Mammary epithelial cell (primary cell): ENCODE measurements at regions of chr7 and their contacts with region 1.

Region 1: DNA sequence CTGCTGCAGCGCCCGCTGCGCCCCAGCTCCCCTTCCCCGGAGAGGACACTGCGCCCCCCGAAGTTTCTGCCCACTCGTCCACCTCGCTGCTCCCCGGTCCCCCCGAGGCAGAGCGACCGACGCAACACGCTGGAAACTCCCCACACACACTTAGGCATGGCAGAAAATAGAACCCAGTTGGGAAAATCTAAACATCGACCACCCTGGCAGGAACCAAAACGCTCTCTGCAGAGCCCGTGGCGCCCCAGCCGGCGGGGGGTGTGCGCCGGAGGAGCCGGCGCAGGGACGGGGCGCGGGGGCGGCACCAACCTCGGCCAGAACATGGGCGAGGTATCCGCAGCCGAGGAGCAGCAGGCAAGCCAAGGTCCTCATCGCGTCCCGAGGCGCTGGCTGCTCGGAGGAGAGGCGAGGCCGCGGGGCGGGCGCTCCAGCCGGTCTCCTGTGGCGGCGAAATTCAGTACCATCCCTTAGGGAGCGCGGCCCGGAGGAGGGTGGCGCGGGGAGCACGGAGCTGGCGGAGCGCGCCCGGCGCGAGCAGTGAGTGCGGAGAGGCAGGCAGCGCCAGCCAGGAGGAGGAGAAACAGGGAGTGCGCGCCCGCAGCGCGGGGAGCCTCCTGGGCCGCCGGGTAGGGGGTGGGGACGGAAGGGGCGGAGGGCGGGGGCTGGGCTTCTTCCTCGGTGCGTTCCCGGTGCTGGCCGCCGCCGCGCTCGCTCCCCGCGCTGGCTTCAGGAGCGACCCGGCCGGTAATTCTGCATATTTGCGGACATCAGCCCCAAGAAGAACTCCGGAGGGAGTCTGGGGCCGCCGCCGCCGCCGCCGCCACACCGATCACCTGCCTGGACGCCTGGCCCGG is 789 bp downstream of the PDGFA start:
- DNase-seq: peak; percentile 82
- H3K4me3 ChIP-seq: peak overlapping the region; percentile 66 to 92 (median 88)
- H3K27ac ChIP-seq: peak overlapping the region; percentile 46
- H3K4me1 ChIP-seq: peaks cover 50% of the 10 kb centered on the region
- H3K27me3 ChIP-seq: no peaks in the 10 kb centered on the region
- CTCF ChIP-seq: no peak

Region 2: GRCh38 chr7:369476-370258 is 149.2 kb before region 1 on chr7:
- CTCF ChIA-PET with region 1: no interaction called
- dilution Hi-C with region 1: no loop called
- in situ Hi-C with region 1: no loop called
- intact Hi-C with region 1: loop called (anchors 1 kb)
- DNase-seq: peak; percentile 78
- H3K4me3 ChIP-seq: peak overlapping the region in 2 of 3 experiments; percentile 4 to 36
- H3K27ac ChIP-seq: peak overlapping the region; percentile 69
- H3K4me1 ChIP-seq: peaks cover 43% of the 10 kb centered on the region
- H3K27me3 ChIP-seq: no peaks in the 10 kb centered on the region
- CTCF ChIP-seq: peak; percentile 38 to 48

Region 3: DNA sequence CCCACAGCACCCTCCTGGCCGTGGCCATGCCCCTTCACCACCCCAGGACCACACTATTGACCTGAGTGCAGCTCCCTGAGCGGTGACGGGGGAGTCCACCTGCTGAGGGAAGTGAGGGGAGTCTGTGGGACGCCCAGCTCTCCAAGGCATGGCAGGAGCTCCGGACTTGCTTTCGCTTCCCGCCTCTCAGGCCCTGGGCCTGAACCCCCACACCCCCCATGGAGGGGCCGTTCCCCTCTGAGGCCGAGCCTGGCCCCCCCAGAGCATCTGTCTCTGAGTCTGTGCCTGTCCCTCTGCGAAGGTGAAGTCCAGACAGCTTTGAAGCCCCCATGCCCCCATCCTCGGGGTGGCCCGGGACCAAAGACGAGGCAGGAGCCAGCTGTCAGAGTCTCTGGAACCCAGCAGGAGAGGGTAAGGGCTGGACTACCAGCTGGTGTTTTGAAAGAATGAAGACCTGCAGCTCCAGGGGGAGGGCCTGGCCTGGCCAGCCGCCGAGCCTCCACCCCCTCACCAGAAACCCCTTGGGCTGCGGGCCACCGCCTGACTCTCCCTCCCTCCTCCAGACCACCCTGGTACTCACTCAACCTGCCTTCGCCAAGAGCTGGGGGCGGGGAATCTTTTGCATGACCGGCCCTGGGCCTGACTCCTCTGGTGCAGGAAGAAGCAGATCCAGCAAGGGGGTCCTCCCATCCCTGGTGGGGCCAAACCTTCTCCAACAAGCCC is 113.2 kb before region 1 on chr7:
- CTCF ChIA-PET with region 1: no interaction called
- dilution Hi-C with region 1: no loop called
- in situ Hi-C with region 1: no loop called
- intact Hi-C with region 1: no loop called
- DNase-seq: no peak
- H3K4me3 ChIP-seq: no peak overlapping the region
- H3K27ac ChIP-seq: no peak overlapping the region
- H3K4me1 ChIP-seq: no peaks in the 10 kb centered on the region
- H3K27me3 ChIP-seq: peaks cover 8% of the 10 kb centered on the region
- CTCF ChIP-seq: no peak

Region 4: GRCh38 chr7:537911-538634 is 19.2 kb after region 1 on chr7:
- CTCF ChIA-PET with region 1: no interaction called
- dilution Hi-C with region 1: no loop called
- in situ Hi-C with region 1: no loop called
- intact Hi-C with region 1: loop called (anchors 1 kb)
- DNase-seq: peak; percentile 87
- H3K4me3 ChIP-seq: peak overlapping the region in 2 of 3 experiments; percentile 10 to 53
- H3K27ac ChIP-seq: peak overlapping the region; percentile 85
- H3K4me1 ChIP-seq: peaks cover 44% of the 10 kb centered on the region
- H3K27me3 ChIP-seq: no peaks in the 10 kb centered on the region
- CTCF ChIP-seq: no peak

Region 5: GRCh38 chr7:636396-636795 is 117.5 kb after region 1 on chr7:
- CTCF ChIA-PET with region 1: no interaction called
- dilution Hi-C with region 1: no loop called
- in situ Hi-C with region 1: no loop called
- intact Hi-C with region 1: loop called (anchors 5 kb)
- DNase-seq: no peak
- H3K4me3 ChIP-seq: no peak overlapping the region
- H3K27ac ChIP-seq: no peak overlapping the region
- H3K4me1 ChIP-seq: no peaks in the 10 kb centered on the region
- H3K27me3 ChIP-seq: no peaks in the 10 kb centered on the region
- CTCF ChIP-seq: peak in 1 of 2 donors; percentile 32

Region 6: GRCh38 chr7:726084-726853 is 207.4 kb after region 1 on chr7 and contains the start of gene DNAAF5:
- CTCF ChIA-PET with region 1: no interaction called
- dilution Hi-C with region 1: no loop called
- in situ Hi-C with region 1: no loop called
- intact Hi-C with region 1: loop called (anchors 2 kb)
- DNase-seq: peak; percentile 74
- H3K4me3 ChIP-seq: peak within 1 kb of the TSS; percentile 55 to 79 (median 66)
- H3K27ac ChIP-seq: peak within 1 kb of the TSS; percentile 34
- H3K4me1 ChIP-seq: peaks cover 24% of the 10 kb centered on the region
- H3K27me3 ChIP-seq: no peaks in the 10 kb centered on the region
- CTCF ChIP-seq: no peak
- total RNA-seq, gene DNAAF5: 27.8 to 34.0 TPM